ENCODE measurements at regions of chr4 and their contacts with region 1.

Region 1: GRCh38 chr4:74531963-74532794 is 87.2 kb downstream of the AREG start:
- DNase-seq: peak; percentile 87
- H3K4me3 ChIP-seq: no peak overlapping the region
- H3K27ac ChIP-seq: no peak overlapping the region
- H3K4me1 ChIP-seq: no peaks in the 10 kb centered on the region
- H3K27me3 ChIP-seq: no peaks in the 10 kb centered on the region
- CTCF ChIP-seq: peak; percentile 53 to 60
- POLR2A ChIP-seq: no peak

Region 2: GRCh38 chr4:74228691-74229640 is 303.2 kb before region 1 on chr4:
- CTCF ChIA-PET with region 1: interaction called, 4 read pairs
- POLR2A ChIA-PET with region 1: no interaction called
- dilution Hi-C with region 1: no loop called
- intact Hi-C with region 1: loop called (anchors 10 kb)
- DNase-seq: peak; percentile 74
- H3K4me3 ChIP-seq: no peak overlapping the region
- H3K27ac ChIP-seq: no peak overlapping the region
- H3K4me1 ChIP-seq: peaks cover 23% of the 10 kb centered on the region
- H3K27me3 ChIP-seq: no peaks in the 10 kb centered on the region
- CTCF ChIP-seq: peak; percentile 86 to 95
- POLR2A ChIP-seq: no peak

Region 3: DNA sequence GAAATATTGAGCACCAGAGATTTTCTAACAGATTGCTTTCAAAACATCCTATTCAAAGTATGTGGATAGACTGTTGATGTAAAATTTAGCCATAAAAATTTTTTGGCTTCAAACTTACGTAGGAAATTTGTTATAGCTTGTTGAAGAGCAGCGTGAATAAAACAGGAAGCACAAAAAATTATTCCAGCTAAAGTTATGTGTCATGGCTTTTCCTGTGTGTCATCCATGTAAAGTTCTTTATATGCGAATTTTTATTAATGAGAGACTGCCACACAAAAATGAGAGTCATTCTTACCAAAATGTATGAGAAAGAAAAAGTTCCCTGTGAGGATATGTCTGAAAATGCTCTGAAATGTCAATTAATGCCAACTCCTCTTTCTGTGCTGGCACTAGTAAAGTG is 204.4 kb before region 1 on chr4:
- CTCF ChIA-PET with region 1: interaction called, 15 read pairs
- POLR2A ChIA-PET with region 1: no interaction called
- dilution Hi-C with region 1: no loop called
- intact Hi-C with region 1: no loop called
- DNase-seq: peak; percentile 78
- H3K4me3 ChIP-seq: peak overlapping the region in 1 of 3 experiments; percentile 19
- H3K27ac ChIP-seq: peak overlapping the region; percentile 65
- H3K4me1 ChIP-seq: peaks cover 20% of the 10 kb centered on the region
- H3K27me3 ChIP-seq: no peaks in the 10 kb centered on the region
- CTCF ChIP-seq: no peak
- POLR2A ChIP-seq: no peak

Region 4: GRCh38 chr4:74370912-74371311 is 161.3 kb before region 1 on chr4:
- CTCF ChIA-PET with region 1: interaction called, 224 read pairs
- POLR2A ChIA-PET with region 1: no interaction called
- dilution Hi-C with region 1: loop called (anchors 25 kb)
- intact Hi-C with region 1: loop called (anchors 1 kb)
- DNase-seq: peak; percentile 60
- H3K4me3 ChIP-seq: no peak overlapping the region
- H3K27ac ChIP-seq: no peak overlapping the region
- H3K4me1 ChIP-seq: peaks cover 7% of the 10 kb centered on the region
- H3K27me3 ChIP-seq: no peaks in the 10 kb centered on the region
- CTCF ChIP-seq: peak; percentile 62 to 80
- POLR2A ChIP-seq: no peak

Region 5: DNA sequence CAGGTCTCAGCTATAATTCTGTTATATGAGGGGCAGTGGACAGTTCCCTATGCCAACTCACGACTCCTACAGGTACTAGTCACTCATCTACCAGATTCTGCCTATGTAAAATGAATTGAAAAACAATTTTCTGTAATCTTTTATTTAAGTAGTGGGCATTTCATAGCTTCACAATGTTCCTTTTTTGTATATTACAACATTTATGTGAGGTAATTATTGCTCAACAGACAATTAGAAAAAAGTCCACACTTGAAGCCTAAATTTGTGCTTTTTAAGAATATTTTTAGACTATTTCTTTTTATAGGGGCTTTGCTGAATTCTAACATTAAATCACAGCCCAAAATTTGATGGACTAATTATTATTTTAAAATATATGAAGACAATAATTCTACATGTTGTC is 146.8 kb before region 1 on chr4:
- CTCF ChIA-PET with region 1: interaction called, 14 read pairs
- POLR2A ChIA-PET with region 1: no interaction called
- dilution Hi-C with region 1: loop called (anchors 25 kb)
- intact Hi-C with region 1: no loop called
- DNase-seq: no peak
- H3K4me3 ChIP-seq: no peak overlapping the region
- H3K27ac ChIP-seq: no peak overlapping the region
- H3K4me1 ChIP-seq: no peaks in the 10 kb centered on the region
- H3K27me3 ChIP-seq: no peaks in the 10 kb centered on the region
- CTCF ChIP-seq: no peak
- POLR2A ChIP-seq: no peak

Region 6: DNA sequence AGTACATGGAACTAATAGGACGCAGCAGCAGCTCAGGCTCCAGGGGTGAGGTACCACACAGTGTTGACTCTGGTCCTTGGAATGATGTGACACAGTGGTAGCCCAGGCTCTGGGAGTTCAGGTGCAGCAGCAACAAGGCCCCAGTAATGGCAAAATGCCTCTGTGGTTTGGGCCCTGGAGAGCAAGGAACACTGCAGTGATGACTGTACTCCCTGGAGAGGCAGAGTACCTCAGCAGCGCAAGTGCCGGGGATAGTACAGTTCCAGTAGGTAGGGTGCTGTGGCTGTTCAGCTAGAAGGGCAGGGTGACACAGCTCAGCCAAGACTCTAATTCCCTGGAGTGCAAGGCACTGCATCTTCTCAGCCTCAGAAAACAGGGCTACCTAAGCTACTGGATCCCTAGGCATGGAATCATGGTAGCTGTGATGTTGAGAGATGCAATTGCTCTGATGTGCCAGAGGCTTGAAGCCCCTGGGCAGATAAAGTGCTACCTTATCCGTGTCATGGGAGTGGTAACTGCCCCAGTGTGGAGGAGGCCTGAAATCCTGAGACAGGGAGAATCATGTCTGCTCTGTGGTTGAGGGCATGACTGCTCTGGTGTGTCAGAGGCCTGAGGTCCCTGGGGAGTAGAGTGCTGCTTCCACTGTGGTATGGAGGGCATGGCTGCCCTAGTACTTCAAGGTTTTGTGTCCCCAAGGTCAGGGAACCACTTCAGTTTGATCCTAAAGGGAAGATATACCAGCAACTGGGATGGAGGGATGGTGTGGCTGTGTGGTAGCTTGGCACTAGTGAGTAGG is 32.0 kb before region 1 on chr4:
- CTCF ChIA-PET with region 1: interaction called, 10 read pairs
- POLR2A ChIA-PET with region 1: no interaction called
- dilution Hi-C with region 1: no loop called
- intact Hi-C with region 1: no loop called
- DNase-seq: no peak
- H3K4me3 ChIP-seq: no peak overlapping the region
- H3K27ac ChIP-seq: no peak overlapping the region
- H3K4me1 ChIP-seq: peaks cover 23% of the 10 kb centered on the region
- H3K27me3 ChIP-seq: no peaks in the 10 kb centered on the region
- CTCF ChIP-seq: no peak
- POLR2A ChIP-seq: no peak

Region 7: GRCh38 chr4:74543231-74543670 is 11.1 kb after region 1 on chr4:
- CTCF ChIA-PET with region 1: interaction called, 10 read pairs
- POLR2A ChIA-PET with region 1: no interaction called
- dilution Hi-C with region 1: no loop called
- intact Hi-C with region 1: no loop called
- DNase-seq: no peak
- H3K4me3 ChIP-seq: no peak overlapping the region
- H3K27ac ChIP-seq: no peak overlapping the region
- H3K4me1 ChIP-seq: peaks cover 48% of the 10 kb centered on the region
- H3K27me3 ChIP-seq: no peaks in the 10 kb centered on the region
- CTCF ChIP-seq: no peak
- POLR2A ChIP-seq: no peak

Measured in endothelial cell of umbilical vein (primary cell).